H1 (cell line): ENCODE measurements at regions of chr7 and their contacts with region 1.

Region 1: GRCh38 chr7:101702362-101702850 is 73.3 kb upstream of the MYL10 start:
- DNase-seq: no peak
- H3K4me3 ChIP-seq: no peak overlapping the region
- H3K27ac ChIP-seq: no peak overlapping the region
- H3K4me1 ChIP-seq: no peaks in the 10 kb centered on the region
- H3K27me3 ChIP-seq: no peaks in the 10 kb centered on the region; a peak in 1 of 7 replicates
- CTCF ChIP-seq: peak in 2 of 3 experiments; percentile 12 to 31; a peak in 2 of 4 replicates
- EP300 ChIP-seq: no peak
- POLR2A ChIP-seq: no peak
- RAD21 ChIP-seq: peak; percentile 13 to 41; a peak in 1 of 4 replicates

Region 2: DNA sequence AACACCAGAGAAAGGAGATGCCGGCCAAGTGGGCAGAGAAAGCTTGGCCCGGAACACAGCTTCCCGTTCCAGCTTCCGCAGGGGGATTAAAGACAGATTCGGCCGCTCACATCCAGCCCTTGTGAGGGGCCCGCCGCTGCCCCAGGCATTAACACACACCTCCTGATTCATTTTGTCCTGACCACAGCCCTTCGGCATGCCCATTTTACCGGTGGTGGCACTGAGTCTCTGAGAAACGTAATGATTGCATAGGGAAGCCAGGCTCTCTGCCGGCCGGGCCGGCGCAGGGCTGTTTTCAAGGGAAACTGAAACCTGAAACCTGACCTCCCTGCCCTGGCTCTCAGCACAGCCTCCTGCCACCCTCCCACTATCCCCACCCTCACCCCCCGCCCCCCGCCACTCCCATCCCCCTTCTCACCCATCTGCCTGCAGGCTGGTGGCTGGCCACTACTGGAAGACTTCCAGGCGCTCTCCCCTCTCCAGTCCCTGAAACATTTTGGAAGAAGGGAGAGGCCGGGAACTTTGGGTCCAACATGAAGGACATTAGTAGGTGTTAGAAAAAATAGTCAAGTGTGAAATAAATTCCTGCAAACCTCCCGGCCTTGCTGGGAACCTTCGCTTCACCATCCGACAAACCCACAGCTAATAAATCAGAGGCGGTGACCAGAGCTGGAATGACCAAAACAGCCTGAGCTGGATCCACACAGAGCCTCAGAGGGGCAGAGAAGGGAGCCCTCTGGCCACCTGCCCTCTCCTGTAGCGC is 31.5 kb after region 1 on chr7:
- CTCF ChIA-PET with region 1: interaction called, 13 read pairs
- POLR2A ChIA-PET with region 1: no interaction called
- DNase-seq: peak in 1 of 2 experiments; percentile 71
- H3K4me3 ChIP-seq: peak overlapping the region in 1 of 4 experiments; percentile 31; a peak in 1 of 8 replicates
- H3K27ac ChIP-seq: 0 out of 2 replicates have a peak overlapping the region, but pooled peaks have one; percentile 38
- H3K4me1 ChIP-seq: peaks cover 3 to 13% (median 7%) of the 10 kb centered on the region in 4 experiments; a peak in 5 of 7 replicates
- H3K27me3 ChIP-seq: no peaks in the 10 kb centered on the region
- CTCF ChIP-seq: no peak
- EP300 ChIP-seq: no peak
- POLR2A ChIP-seq: no peak
- RAD21 ChIP-seq: no peak